ENCODE measurements at regions of chr14 and their contacts with region 1.

Region 1: GRCh38 chr14:49461529-49462401 is 124.4 kb downstream of the RPS29 start:
- DNase-seq: peak; percentile 78
- H3K4me3 ChIP-seq: no peak overlapping the region
- H3K27ac ChIP-seq: no peak overlapping the region
- H3K4me1 ChIP-seq: no peaks in the 10 kb centered on the region
- H3K27me3 ChIP-seq: peaks cover 5 to 15% of the 10 kb centered on the region in 2 experiments
- CTCF ChIP-seq: peak; percentile 48 to 51
- POLR2A ChIP-seq: no peak

Region 2: GRCh38 chr14:49447540-49448107 is 14.1 kb before region 1 on chr14:
- CTCF ChIA-PET with region 1: interaction called, 25 read pairs
- POLR2A ChIA-PET with region 1: no interaction called
- dilution Hi-C with region 1: no loop called
- intact Hi-C with region 1: no loop called
- DNase-seq: no peak
- H3K4me3 ChIP-seq: no peak overlapping the region
- H3K27ac ChIP-seq: no peak overlapping the region
- H3K4me1 ChIP-seq: no peaks in the 10 kb centered on the region
- H3K27me3 ChIP-seq: no peaks in the 10 kb centered on the region
- CTCF ChIP-seq: no peak
- POLR2A ChIP-seq: no peak

Region 3: GRCh38 chr14:49497725-49498348 is 36.1 kb after region 1 on chr14:
- CTCF ChIA-PET with region 1: interaction called, 154 read pairs
- POLR2A ChIA-PET with region 1: no interaction called
- dilution Hi-C with region 1: no loop called
- intact Hi-C with region 1: loop called (anchors 1 kb)
- DNase-seq: peak; percentile 78
- H3K4me3 ChIP-seq: no peak overlapping the region
- H3K27ac ChIP-seq: no peak overlapping the region
- H3K4me1 ChIP-seq: no peaks in the 10 kb centered on the region
- H3K27me3 ChIP-seq: peaks cover 7 to 9% of the 10 kb centered on the region in 2 experiments
- CTCF ChIP-seq: peak; percentile 53 to 63
- POLR2A ChIP-seq: no peak

Region 4: DNA sequence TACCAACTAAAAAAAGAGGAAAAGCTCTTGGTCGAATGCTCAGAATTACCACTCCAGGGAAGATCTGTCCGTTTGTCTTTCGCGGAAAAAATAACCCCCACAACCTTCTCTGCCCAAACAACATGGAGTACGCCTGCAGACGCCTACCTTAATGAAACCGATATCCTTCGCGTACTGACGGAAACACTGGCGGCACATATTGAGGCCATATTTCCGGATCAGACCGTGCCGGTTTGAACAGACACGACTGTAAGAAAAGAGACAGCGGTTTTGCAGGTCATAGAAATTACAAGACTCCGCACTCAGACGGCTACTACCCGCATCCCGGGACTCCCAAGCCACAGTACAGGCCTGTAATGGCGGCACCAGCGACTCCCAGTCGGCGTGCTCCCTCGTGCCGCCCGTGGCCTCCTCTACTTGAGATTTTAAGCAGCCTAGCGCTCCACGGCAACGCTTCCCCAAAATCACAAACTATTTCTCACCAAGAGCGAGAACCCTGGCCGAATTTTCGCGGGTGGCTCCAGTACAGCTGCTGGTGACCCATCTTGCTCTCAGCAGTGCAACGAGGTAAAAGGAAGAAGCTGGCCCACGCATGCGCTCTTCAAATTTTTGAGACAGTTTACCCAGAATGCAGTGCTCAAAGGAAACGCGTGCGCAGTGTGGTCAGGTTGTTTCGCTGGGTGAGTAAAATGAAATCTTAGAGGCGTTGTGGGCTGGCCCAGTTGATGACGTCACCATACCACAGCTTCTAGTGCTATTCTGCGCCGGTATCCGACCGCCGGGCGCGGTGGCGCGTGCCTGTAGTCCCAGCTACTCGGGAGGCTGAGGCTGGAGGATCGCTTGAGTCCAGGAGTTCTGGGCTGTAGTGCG is 124.3 kb after region 1 on chr14 and contains the start of gene RPS29:
- CTCF ChIA-PET with region 1: interaction called, 30 read pairs
- POLR2A ChIA-PET with region 1: interaction called, 3 read pairs
- dilution Hi-C with region 1: no loop called
- intact Hi-C with region 1: loop called (anchors 1 kb)
- DNase-seq: peak; percentile 100
- H3K4me3 ChIP-seq: peak within 1 kb of the TSS; percentile 90 to 99 (median 97)
- H3K27ac ChIP-seq: peak within 1 kb of the TSS; percentile 82
- H3K4me1 ChIP-seq: peaks cover 10% of the 10 kb centered on the region
- H3K27me3 ChIP-seq: no peaks in the 10 kb centered on the region
- CTCF ChIP-seq: no peak
- POLR2A ChIP-seq: peak; percentile 95
- total RNA-seq, gene RPS29: 1,408 and 1,453 TPM in 2 replicates

Region 5: DNA sequence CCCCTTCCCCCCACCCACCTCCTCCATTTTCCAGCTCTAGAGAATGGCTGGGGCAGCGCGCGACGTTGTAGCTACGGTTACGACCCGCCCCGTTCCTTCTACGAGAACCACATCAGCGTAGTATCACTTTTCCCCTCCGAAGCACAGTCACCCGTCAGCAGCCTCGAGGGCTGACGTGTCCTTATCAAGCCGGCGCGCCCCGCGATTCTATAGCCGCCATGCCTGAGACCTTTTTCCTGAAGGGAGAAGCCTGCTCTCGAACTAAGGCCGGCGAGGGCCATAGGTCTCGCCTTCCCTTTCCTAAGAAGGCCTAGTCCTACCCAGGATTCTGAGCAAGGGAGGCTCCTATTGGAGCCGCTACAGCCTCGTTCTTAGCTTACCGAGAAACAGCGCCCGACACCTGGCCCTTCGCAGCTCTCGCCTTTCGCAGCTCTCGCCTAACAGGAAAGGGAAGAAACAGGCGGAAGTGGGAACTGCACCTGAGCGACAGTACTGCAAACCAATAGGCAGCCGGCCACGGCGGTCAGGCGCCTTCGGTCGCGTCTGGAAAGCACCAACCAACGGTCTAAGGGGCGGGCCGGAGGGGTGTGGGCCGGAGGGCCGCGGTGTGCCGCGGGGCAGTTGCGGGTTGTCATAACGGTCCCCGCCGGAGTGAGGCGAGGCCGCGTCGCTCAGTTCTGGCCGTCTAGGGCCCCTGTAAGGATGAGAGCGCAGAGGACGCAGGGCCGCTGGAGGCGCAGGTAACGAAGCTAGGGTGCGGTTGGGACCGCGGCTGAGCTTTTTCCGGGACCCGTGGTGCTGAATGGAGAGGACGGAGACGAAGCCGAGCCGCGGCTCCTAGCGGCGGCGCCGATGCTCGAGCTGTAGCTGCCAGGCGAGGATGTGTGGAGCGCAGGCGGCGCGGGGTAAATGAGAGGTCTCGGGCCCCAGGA is 158.7 kb after region 1 on chr14 and contains the starts of genes MGAT2 and RPL36AL:
- CTCF ChIA-PET with region 1: interaction called, 11 read pairs
- POLR2A ChIA-PET with region 1: no interaction called
- dilution Hi-C with region 1: no loop called
- intact Hi-C with region 1: no loop called
- DNase-seq: peak; percentile 99
- H3K4me3 ChIP-seq: peak within 1 kb of the TSS; percentile 59 to 95 (median 83)
- H3K27ac ChIP-seq: peak within 1 kb of the TSS; percentile 85
- H3K4me1 ChIP-seq: peaks cover 40% of the 10 kb centered on the region
- H3K27me3 ChIP-seq: no peaks in the 10 kb centered on the region
- CTCF ChIP-seq: peak; percentile 8 to 51
- POLR2A ChIP-seq: peak; percentile 94
- total RNA-seq, gene MGAT2: 68.1 and 72.6 TPM in 2 replicates
- total RNA-seq, gene RPL36AL: 251 and 260 TPM in 2 replicates

Region 6: GRCh38 chr14:49767562-49768300 is 306.0 kb after region 1 on chr14 and contains the start of gene KLHDC2:
- CTCF ChIA-PET with region 1: interaction called, 28 read pairs
- POLR2A ChIA-PET with region 1: no interaction called
- dilution Hi-C with region 1: no loop called
- intact Hi-C with region 1: no loop called
- DNase-seq: peak; percentile 88
- H3K4me3 ChIP-seq: peak within 1 kb of the TSS; percentile 68 to 86 (median 75)
- H3K27ac ChIP-seq: peak within 1 kb of the TSS; percentile 86
- H3K4me1 ChIP-seq: peaks cover 16% of the 10 kb centered on the region
- H3K27me3 ChIP-seq: no peaks in the 10 kb centered on the region
- CTCF ChIP-seq: peak in 1 of 2 donors; percentile 34
- POLR2A ChIP-seq: peak; percentile 81
- total RNA-seq, gene KLHDC2: 29.2 and 30.2 TPM in 2 replicates

Region 7: DNA sequence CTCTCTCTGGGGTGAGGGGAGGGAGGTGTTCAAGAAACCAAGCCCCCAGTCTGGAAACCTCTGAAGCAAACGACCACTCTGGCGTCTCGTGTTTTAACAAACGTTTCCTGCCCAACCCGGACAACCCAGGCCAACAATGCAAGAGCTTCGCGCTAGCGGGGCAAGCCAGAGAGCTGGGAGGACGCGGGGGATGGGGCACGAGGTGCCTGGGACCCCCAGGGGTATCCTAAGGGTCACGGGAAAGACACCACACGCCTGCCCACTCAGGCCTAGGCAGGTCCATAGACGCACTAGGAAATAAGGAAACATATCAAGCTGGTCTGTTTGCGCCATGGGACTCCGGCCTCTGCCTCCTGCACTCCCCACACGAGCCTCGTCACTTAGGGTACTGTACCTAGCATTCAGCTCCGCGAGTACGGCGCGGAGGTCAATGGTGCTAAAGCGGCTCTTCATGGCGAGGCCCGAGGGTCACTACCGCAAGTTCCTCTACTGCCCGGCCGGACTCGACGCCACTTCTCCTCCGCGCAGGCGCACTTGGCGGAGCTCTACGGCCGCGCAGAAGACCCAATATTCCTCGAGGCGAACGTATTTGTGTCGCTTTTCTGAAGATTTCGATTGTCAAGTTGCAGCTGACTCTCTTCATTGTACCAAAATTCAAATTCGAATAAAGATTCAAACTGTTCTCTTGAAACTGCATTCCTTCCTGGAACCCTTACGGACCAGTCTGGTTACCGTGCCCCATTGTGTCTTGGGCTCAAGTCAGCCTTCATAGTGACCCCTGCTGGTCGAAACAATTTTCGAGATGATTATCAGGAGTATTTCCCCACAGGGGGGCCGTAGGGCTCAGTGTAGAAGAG is 390.8 kb after region 1 on chr14 and contains the start of gene NEMF:
- CTCF ChIA-PET with region 1: interaction called, 10 read pairs
- POLR2A ChIA-PET with region 1: no interaction called
- dilution Hi-C with region 1: no loop called
- intact Hi-C with region 1: no loop called
- DNase-seq: peak; percentile 94
- H3K4me3 ChIP-seq: peak within 1 kb of the TSS; percentile 92 to 97 (median 94)
- H3K27ac ChIP-seq: peak within 1 kb of the TSS; percentile 83
- H3K4me1 ChIP-seq: peaks cover 11% of the 10 kb centered on the region
- H3K27me3 ChIP-seq: no peaks in the 10 kb centered on the region
- CTCF ChIP-seq: peak; percentile 68 to 87
- POLR2A ChIP-seq: peak; percentile 89
- total RNA-seq, gene NEMF: 71.4 and 74.2 TPM in 2 replicates

Region 8: GRCh38 chr14:50311337-50311974 is 849.7 kb after region 1 on chr14:
- CTCF ChIA-PET with region 1: no interaction called
- POLR2A ChIA-PET with region 1: no interaction called
- dilution Hi-C with region 1: no loop called
- intact Hi-C with region 1: no loop called
- DNase-seq: peak; percentile 8
- H3K4me3 ChIP-seq: peak overlapping the region; percentile 61 to 83 (median 79)
- H3K27ac ChIP-seq: no peak overlapping the region
- H3K4me1 ChIP-seq: peaks cover 15% of the 10 kb centered on the region
- H3K27me3 ChIP-seq: no peaks in the 10 kb centered on the region
- CTCF ChIP-seq: peak in 1 of 2 donors; percentile 32
- POLR2A ChIP-seq: no peak